GM12878 (cell line): ENCODE measurements at regions of chr17 and their contacts with region 1.

Region 1: GRCh38 chr17:7982666-7983065 is 19.7 kb upstream of the GUCY2D start:
- DNase-seq: no peak
- ATAC-seq: no peak
- H3K4me3 ChIP-seq: no peak overlapping the region
- H3K27ac ChIP-seq: no peak overlapping the region
- H3K4me1 ChIP-seq: no peaks in the 10 kb centered on the region
- H3K27me3 ChIP-seq: peaks cover 0 to 5% of the 10 kb centered on the region in 2 experiments; a peak in 1 of 4 replicates
- CTCF ChIP-seq: peak in 2 of 3 experiments; percentile 9 to 40; a peak in 2 of 6 replicates
- EP300 ChIP-seq: no peak
- POLR2A ChIP-seq: no peak
- RAD21 ChIP-seq: peak; percentile 41; the same call in 1 of the 2 replicates

Region 2: DNA sequence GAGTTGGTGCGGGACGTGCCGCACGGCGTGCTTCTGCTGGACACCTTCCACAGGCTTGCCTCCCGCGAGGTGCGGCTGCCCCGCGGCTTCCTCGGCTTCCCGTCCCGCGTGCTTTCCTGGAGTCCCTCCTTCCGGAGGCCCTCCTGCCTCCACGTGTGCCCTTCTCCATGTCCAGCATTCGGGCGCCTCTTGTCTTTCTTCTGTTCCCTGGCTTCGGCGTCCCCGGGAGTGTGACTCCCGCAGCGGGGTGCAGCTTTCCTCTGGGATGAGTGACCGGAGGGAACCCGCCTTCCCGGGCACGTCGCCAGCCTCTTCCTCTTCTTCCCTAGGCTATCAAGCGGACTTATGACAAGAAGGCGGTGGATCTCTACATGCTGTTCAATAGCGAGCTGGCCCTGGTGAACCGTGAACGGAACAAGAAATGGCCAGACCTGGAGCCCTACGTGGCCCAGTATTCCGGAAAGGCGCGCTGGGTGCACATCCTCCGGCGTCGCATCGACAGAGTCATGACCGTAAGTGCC is 242.1 kb before region 1 on chr17:
- CTCF ChIA-PET with region 1: interaction called, 50 read pairs
- POLR2A ChIA-PET with region 1: no interaction called
- RAD21 ChIA-PET with region 1: interaction called, 3 read pairs
- SMC1A ChIA-PET with region 1: interaction called, 25 read pairs
- in situ Hi-C with region 1: no loop called
- intact Hi-C with region 1: no loop called
- DNase-seq: no peak
- ATAC-seq: no peak
- H3K4me3 ChIP-seq: no peak overlapping the region
- H3K27ac ChIP-seq: no peak overlapping the region
- H3K4me1 ChIP-seq: no peaks in the 10 kb centered on the region
- H3K27me3 ChIP-seq: no peaks in the 10 kb centered on the region; a peak in 2 of 4 replicates
- CTCF ChIP-seq: no peak
- EP300 ChIP-seq: no peak
- POLR2A ChIP-seq: no peak
- RAD21 ChIP-seq: no peak

Region 3: GRCh38 chr17:7834962-7835813 is 147.5 kb before region 1 on chr17:
- CTCF ChIA-PET with region 1: interaction called, 14 read pairs
- POLR2A ChIA-PET with region 1: no interaction called
- RAD21 ChIA-PET with region 1: no interaction called
- SMC1A ChIA-PET with region 1: no interaction called
- in situ Hi-C with region 1: no loop called
- intact Hi-C with region 1: no loop called
- DNase-seq: peak; percentile 90
- ATAC-seq: peak; percentile 60
- H3K4me3 ChIP-seq: peak overlapping the region; percentile 100
- H3K27ac ChIP-seq: peak overlapping the region; percentile 76
- H3K4me1 ChIP-seq: peaks cover 21% of the 10 kb centered on the region
- H3K27me3 ChIP-seq: peaks cover 0 to 1% of the 10 kb centered on the region in 2 experiments; a peak in 1 of 4 replicates
- CTCF ChIP-seq: peak; percentile 82 to 87 (median 85)
- EP300 ChIP-seq: peak in 1 of 2 experiments; percentile 35; a peak in 1 of 4 replicates
- POLR2A ChIP-seq: no peak
- RAD21 ChIP-seq: peak; percentile 78

Region 4: GRCh38 chr17:7915611-7916382 is 66.9 kb before region 1 on chr17 and contains the start of gene RNF227:
- CTCF ChIA-PET with region 1: interaction called, 79 read pairs
- POLR2A ChIA-PET with region 1: no interaction called
- RAD21 ChIA-PET with region 1: interaction called, 8 read pairs
- SMC1A ChIA-PET with region 1: interaction called, 9 read pairs
- in situ Hi-C with region 1: loop called (anchors 5 kb)
- intact Hi-C with region 1: no loop called
- DNase-seq: peak; percentile 57
- ATAC-seq: peak; percentile 87
- H3K4me3 ChIP-seq: peak within 1 kb of the TSS; percentile 76
- H3K27ac ChIP-seq: peak within 1 kb of the TSS; percentile 34
- H3K4me1 ChIP-seq: peaks cover 10% of the 10 kb centered on the region
- H3K27me3 ChIP-seq: no peaks in the 10 kb centered on the region
- CTCF ChIP-seq: 0 out of 6 replicates have a peak, but pooled peaks of 1 of the 3 experiments have one; percentile 6
- EP300 ChIP-seq: no peak
- POLR2A ChIP-seq: peak; percentile 71
- RAD21 ChIP-seq: no peak
- polyA plus RNA-seq, gene RNF227: 0.49 to 0.87 TPM

Region 5: GRCh38 chr17:7931709-7932482 is 50.8 kb before region 1 on chr17 and contains the starts of genes CNTROB and TRAPPC1:
- CTCF ChIA-PET with region 1: interaction called, 76 read pairs
- POLR2A ChIA-PET with region 1: interaction called, 3 read pairs
- RAD21 ChIA-PET with region 1: interaction called, 6 read pairs
- SMC1A ChIA-PET with region 1: interaction called, 16 read pairs
- in situ Hi-C with region 1: no loop called
- intact Hi-C with region 1: loop called (anchors 5 kb)
- DNase-seq: peak; percentile 98
- ATAC-seq: peak; percentile 92
- H3K4me3 ChIP-seq: peak within 1 kb of the TSS; percentile 100
- H3K27ac ChIP-seq: peak within 1 kb of the TSS; percentile 96
- H3K4me1 ChIP-seq: peaks cover 8% of the 10 kb centered on the region
- H3K27me3 ChIP-seq: no peaks in the 10 kb centered on the region
- CTCF ChIP-seq: no peak
- EP300 ChIP-seq: peak in 1 of 2 experiments; percentile 27; a peak in 1 of 4 replicates
- POLR2A ChIP-seq: peak; percentile 92
- RAD21 ChIP-seq: no peak
- polyA plus RNA-seq, gene CNTROB: 2.0 to 4.2 TPM
- polyA plus RNA-seq, gene TRAPPC1: 95.5 to 113 TPM

Region 6: DNA sequence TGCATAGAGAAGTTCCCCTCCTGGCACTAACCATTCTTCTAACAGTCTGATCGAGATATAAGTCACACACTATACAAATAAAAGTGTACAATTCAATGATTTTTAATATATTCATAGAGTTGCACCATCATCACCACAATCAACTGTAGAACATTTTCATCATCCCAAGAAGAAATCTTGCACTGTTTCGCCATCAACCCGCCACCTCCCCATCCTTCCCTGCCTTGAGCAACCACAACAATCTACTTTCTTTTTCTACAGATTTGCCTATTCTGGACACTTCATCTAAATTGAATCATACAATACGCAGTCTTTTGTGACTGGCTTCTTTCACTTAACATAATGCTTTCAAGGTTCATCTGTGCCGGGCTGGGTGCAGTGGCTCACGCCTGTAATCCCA is 13.2 kb before region 1 on chr17:
- CTCF ChIA-PET with region 1: interaction called, 12 read pairs
- POLR2A ChIA-PET with region 1: no interaction called
- RAD21 ChIA-PET with region 1: interaction called, 3 read pairs
- SMC1A ChIA-PET with region 1: interaction called, 4 read pairs
- in situ Hi-C with region 1: no loop called
- intact Hi-C with region 1: no loop called
- DNase-seq: no peak
- ATAC-seq: no peak
- H3K4me3 ChIP-seq: no peak overlapping the region
- H3K27ac ChIP-seq: no peak overlapping the region
- H3K4me1 ChIP-seq: no peaks in the 10 kb centered on the region
- H3K27me3 ChIP-seq: no peaks in the 10 kb centered on the region
- CTCF ChIP-seq: no peak
- EP300 ChIP-seq: no peak
- POLR2A ChIP-seq: no peak
- RAD21 ChIP-seq: no peak